ENCODE measurements at regions of chr17 and their contacts with region 1.

Region 1: DNA sequence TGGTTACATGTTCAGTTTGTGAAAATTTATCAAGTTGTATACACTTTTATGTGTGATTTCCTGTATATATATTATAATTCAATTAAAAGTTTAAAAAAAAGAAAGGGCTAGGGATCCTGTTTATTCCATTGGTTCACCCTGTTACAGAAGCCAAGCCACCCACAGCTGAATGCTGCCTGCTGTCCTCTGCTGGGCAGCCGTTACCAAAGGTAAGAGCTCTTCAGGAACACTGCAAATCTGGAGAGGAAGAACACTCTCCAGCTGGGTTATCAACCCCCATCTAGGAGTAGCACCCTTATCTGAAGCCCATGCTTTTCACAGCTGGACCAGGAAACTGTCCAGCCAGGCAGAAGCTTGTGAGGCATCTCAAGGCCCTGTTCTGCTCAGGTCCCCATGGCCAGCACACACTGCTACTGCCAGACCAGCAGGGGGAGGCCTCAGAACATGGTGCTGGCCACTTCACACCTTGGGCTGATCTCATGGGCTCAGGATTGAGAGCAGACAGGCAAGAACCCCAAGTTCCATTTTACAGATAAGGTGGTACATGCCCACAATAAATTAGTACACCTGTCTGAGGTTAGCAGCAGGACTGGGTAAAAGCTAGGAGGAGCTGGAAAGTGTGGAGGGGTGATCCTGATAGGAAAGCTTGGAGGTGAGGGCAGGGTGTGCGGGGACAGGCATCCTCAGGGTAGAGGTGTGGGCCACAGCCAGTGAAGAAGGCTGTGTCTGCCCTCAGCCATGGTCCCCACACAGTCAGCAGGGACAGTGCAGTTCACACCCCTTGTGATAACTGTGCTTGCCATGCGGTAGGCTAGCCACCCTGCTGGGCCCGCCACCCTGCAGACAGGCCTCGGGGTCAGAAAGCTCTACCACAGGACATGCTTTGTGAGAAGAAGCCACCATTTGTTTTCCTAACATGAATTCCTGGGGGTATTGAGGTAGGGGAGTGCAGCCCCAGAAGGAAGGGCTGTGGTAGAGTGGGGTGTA is 54.3 kb upstream of the SREBF1 start:
- DNase-seq: peak; percentile 70
- ATAC-seq: peak; percentile 84
- H3K4me3 Mint-ChIP-seq: no peak overlapping the region
- H3K27ac Mint-ChIP-seq: peak overlapping the region; percentile 71; the same call in 1 of the 2 replicates
- H3K4me1 Mint-ChIP-seq: peaks cover 32% of the 10 kb centered on the region
- H3K27me3 Mint-ChIP-seq: no peaks in the 10 kb centered on the region
- CTCF ChIP-seq: peak; percentile 59

Region 2: DNA sequence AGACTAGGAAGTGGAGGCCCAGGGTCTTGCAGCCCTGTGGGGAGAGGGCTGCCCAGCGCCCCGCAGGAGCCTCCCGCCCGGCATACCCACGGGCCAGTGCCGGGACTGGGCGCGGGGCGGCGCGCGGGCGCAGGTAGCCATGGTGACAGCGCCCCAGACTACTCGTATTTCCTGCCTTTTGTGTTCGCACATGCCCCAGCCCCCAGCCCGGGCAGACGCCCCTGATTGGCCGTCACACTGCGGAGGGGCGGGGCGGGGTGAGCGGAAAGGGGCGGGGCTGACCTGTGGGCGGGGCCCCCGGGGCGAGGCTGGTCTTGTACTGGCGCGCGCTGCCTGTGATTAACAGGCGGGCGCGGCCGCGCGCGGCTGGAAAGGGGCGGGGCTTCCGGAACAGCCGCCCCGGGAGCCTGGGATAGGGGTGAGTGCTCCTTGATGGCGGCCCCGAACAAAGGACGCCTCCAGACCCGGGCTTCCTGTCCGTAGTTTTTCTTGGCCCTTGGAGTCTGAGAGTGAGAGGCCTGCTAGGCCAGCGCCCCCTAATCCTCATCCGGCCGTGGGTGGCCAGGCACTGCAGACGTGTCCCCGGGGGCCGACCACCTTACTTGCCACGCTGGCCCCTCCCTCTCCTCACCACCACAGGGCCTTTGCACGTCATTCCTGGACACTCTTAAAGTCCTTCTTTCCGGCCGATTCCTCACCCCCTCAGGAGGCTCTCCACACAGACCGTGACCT is 138.8 kb before region 1 on chr17:
- CTCF ChIA-PET with region 1: no interaction called
- POLR2A ChIA-PET with region 1: no interaction called
- DNase-seq: peak; percentile 97
- ATAC-seq: peak; percentile 86
- H3K4me3 Mint-ChIP-seq: peak overlapping the region; percentile 80
- H3K27ac Mint-ChIP-seq: peak overlapping the region; percentile 100
- H3K4me1 Mint-ChIP-seq: peaks cover 56% of the 10 kb centered on the region
- H3K27me3 Mint-ChIP-seq: no peaks in the 10 kb centered on the region
- CTCF ChIP-seq: no peak

Region 3: GRCh38 chr17:17766077-17766743 is 124.9 kb before region 1 on chr17:
- CTCF ChIA-PET with region 1: no interaction called
- POLR2A ChIA-PET with region 1: no interaction called
- DNase-seq: no peak
- ATAC-seq: no peak
- H3K4me3 Mint-ChIP-seq: no peak overlapping the region
- H3K27ac Mint-ChIP-seq: 0 out of 2 replicates have a peak overlapping the region, but pooled peaks have one; percentile 45
- H3K4me1 Mint-ChIP-seq: peaks cover 23% of the 10 kb centered on the region
- H3K27me3 Mint-ChIP-seq: no peaks in the 10 kb centered on the region; the same call in none of the 2 replicates
- CTCF ChIP-seq: no peak

Region 4: DNA sequence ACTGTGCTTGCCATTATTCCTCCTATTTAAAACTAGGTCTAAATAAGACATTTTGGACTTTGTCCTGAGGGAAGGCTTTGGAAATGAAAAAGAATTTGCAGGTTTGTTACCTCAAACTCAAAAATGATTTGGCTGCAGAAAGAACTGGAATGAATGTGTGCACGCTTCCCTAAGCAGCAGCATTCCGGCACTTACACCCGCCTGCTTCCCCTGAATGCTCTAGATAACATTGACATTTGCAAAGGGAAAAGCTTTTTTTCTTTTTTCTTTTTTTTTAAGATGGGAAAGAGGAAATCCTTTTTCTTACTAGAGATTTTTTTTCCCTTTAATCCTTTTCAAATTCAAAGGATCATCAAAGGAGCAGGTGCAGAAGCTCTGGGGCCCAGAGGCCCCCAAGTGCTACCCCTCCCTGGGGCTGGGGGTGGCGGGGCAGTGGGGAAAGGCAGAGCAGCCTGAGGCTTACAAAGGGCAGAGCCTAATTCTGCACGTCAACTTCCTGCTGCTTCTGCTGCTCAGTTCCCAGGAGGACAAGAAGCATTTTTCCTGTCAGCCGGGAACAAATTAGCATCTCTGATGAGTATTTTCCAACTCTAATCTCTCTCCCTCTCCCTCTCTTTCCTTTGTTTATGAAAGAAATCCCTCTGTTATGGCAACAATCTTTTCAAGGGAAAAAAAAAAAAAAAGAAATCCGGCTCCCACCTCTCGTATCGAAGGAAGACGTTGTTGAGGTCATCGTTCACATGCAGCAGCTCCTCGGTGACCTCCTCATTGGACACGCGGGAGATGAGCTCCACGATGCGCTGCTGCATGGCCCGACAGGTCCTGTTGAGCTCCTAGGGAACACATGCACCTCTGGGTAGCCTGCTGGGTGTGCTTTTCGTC is 22.2 kb before region 1 on chr17:
- CTCF ChIA-PET with region 1: interaction called, 36 read pairs
- POLR2A ChIA-PET with region 1: no interaction called
- DNase-seq: no peak
- ATAC-seq: peak; percentile 80
- H3K4me3 Mint-ChIP-seq: peak overlapping the region; percentile 41
- H3K27ac Mint-ChIP-seq: peak overlapping the region; percentile 71
- H3K4me1 Mint-ChIP-seq: peaks cover 54% of the 10 kb centered on the region
- H3K27me3 Mint-ChIP-seq: peaks cover 16% of the 10 kb centered on the region
- CTCF ChIP-seq: no peak

Region 5: GRCh38 chr17:17877529-17878358 is 13.3 kb before region 1 on chr17:
- CTCF ChIA-PET with region 1: interaction called, 18 read pairs
- POLR2A ChIA-PET with region 1: no interaction called
- DNase-seq: peak; percentile 52
- ATAC-seq: peak; percentile 65
- H3K4me3 Mint-ChIP-seq: no peak overlapping the region; the same call in 1 of the 2 replicates
- H3K27ac Mint-ChIP-seq: peak overlapping the region; percentile 77
- H3K4me1 Mint-ChIP-seq: peaks cover 41% of the 10 kb centered on the region
- H3K27me3 Mint-ChIP-seq: no peaks in the 10 kb centered on the region; the same call in 1 of the 2 replicates
- CTCF ChIP-seq: no peak

Region 6: DNA sequence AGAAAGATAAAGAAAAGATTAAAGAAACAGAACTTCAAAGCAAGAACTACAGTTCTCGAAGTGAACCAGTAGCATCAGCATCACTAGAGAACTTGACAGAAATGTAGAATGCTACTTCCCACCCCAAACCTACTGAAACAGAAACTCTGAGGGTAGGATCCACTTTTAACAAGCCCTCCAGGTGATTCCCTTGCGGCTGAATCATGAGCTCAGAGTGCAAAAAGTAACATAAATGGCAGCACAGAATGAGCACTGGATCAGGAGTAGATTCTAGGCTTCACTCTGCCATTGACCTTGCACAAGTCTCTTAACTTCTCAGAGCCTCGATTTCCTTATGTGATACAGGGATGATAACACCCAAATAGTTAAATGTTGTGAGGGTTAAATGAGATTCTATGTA is 75.3 kb after region 1 on chr17:
- CTCF ChIA-PET with region 1: no interaction called
- POLR2A ChIA-PET with region 1: no interaction called
- DNase-seq: no peak
- ATAC-seq: no peak
- H3K4me3 Mint-ChIP-seq: no peak overlapping the region
- H3K27ac Mint-ChIP-seq: no peak overlapping the region
- H3K4me1 Mint-ChIP-seq: peaks cover 9% of the 10 kb centered on the region; the same call in 1 of the 2 replicates
- H3K27me3 Mint-ChIP-seq: no peaks in the 10 kb centered on the region
- CTCF ChIP-seq: no peak

Region 7: DNA sequence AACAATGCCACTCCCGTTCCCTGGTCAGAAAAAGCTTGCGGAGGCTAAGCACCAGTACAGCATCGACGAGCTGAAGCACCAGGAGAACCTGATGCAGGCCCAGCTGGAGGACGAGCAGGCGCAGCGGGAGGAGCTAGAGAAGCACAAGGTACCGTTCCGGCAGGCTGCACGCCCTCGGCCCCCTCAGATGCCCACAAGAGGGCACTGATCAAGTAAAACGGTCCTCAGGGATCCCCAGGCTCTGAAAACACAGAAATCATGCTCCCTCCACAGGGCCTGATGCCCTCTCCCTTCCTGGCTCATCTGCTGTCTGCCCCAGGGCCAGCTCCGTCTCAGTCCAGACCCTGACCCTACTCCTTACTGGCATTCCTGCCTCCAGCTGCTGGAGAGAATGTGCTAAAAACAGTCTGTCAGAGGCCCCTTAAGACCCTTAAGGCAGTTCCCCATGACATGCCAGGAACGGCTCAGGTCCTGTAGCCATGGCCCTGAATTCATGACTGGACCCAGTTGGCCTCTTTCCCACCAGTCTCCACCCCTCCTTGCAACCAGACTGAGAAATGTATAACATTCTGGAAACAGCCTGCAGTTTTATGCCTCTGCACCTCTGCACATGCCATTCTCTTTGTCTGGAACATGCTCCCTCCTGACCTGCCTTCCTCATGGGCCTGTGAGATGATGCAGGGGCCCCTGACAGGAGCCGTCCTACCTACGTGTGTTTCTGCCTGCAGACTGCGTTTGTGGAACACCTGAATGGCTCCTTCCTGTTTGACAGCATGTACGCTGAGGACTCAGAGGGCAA is 103.4 kb after region 1 on chr17:
- CTCF ChIA-PET with region 1: interaction called, 12 read pairs
- POLR2A ChIA-PET with region 1: no interaction called
- DNase-seq: peak; percentile 81
- ATAC-seq: peak; percentile 96
- H3K4me3 Mint-ChIP-seq: no peak overlapping the region
- H3K27ac Mint-ChIP-seq: no peak overlapping the region
- H3K4me1 Mint-ChIP-seq: no peaks in the 10 kb centered on the region
- H3K27me3 Mint-ChIP-seq: no peaks in the 10 kb centered on the region
- CTCF ChIP-seq: peak; percentile 42; the same call in 1 of the 2 replicates

Region 8: GRCh38 chr17:18033442-18034099 is 142.5 kb after region 1 on chr17:
- CTCF ChIA-PET with region 1: interaction called, 19 read pairs
- POLR2A ChIA-PET with region 1: no interaction called
- DNase-seq: no peak
- ATAC-seq: peak; percentile 95
- H3K4me3 Mint-ChIP-seq: no peak overlapping the region
- H3K27ac Mint-ChIP-seq: no peak overlapping the region
- H3K4me1 Mint-ChIP-seq: peaks cover 11% of the 10 kb centered on the region
- H3K27me3 Mint-ChIP-seq: no peaks in the 10 kb centered on the region
- CTCF ChIP-seq: peak; percentile 39; the same call in 1 of the 2 replicates